Endothelial cell of umbilical vein (primary cell): ENCODE measurements at regions of chr3 and their contacts with region 1.

Region 1: GRCh38 chr3:32138545-32139104 is 32.2 kb downstream of the GPD1L start:
- DNase-seq: peak; percentile 80
- H3K4me3 ChIP-seq: no peak overlapping the region
- H3K27ac ChIP-seq: no peak overlapping the region
- H3K4me1 ChIP-seq: peaks cover 28% of the 10 kb centered on the region
- H3K27me3 ChIP-seq: no peaks in the 10 kb centered on the region
- CTCF ChIP-seq: no peak
- POLR2A ChIP-seq: no peak

Region 2: GRCh38 chr3:31610700-31611275 is 527.8 kb before region 1 on chr3:
- CTCF ChIA-PET with region 1: interaction called, 17 read pairs
- POLR2A ChIA-PET with region 1: no interaction called
- dilution Hi-C with region 1: no loop called
- intact Hi-C with region 1: no loop called
- DNase-seq: peak; percentile 70
- H3K4me3 ChIP-seq: no peak overlapping the region
- H3K27ac ChIP-seq: no peak overlapping the region
- H3K4me1 ChIP-seq: no peaks in the 10 kb centered on the region
- H3K27me3 ChIP-seq: no peaks in the 10 kb centered on the region
- CTCF ChIP-seq: peak; percentile 31 to 40
- POLR2A ChIP-seq: no peak

Region 3: GRCh38 chr3:32106280-32106928 is 32.2 kb before region 1 on chr3 and contains the start of gene GPD1L:
- CTCF ChIA-PET with region 1: interaction called, 8 read pairs
- POLR2A ChIA-PET with region 1: no interaction called
- dilution Hi-C with region 1: no loop called
- intact Hi-C with region 1: loop called (anchors 1 kb)
- DNase-seq: peak; percentile 97
- H3K4me3 ChIP-seq: peak within 1 kb of the TSS; percentile 63 to 65 (median 63)
- H3K27ac ChIP-seq: no peak within 1 kb of the TSS
- H3K4me1 ChIP-seq: peaks cover 17% of the 10 kb centered on the region
- H3K27me3 ChIP-seq: no peaks in the 10 kb centered on the region
- CTCF ChIP-seq: no peak
- POLR2A ChIP-seq: peak; percentile 34
- total RNA-seq, gene GPD1L: 11.3 and 12.9 TPM in 2 replicates

Region 4: GRCh38 chr3:32262086-32262600 is 123.5 kb after region 1 on chr3:
- CTCF ChIA-PET with region 1: no interaction called
- POLR2A ChIA-PET with region 1: no interaction called
- dilution Hi-C with region 1: no loop called
- intact Hi-C with region 1: no loop called
- DNase-seq: no peak
- H3K4me3 ChIP-seq: no peak overlapping the region
- H3K27ac ChIP-seq: no peak overlapping the region
- H3K4me1 ChIP-seq: no peaks in the 10 kb centered on the region
- H3K27me3 ChIP-seq: no peaks in the 10 kb centered on the region
- CTCF ChIP-seq: no peak
- POLR2A ChIP-seq: no peak